ENCODE measurements at regions of chr7 and their contacts with region 1.

Region 1: DNA sequence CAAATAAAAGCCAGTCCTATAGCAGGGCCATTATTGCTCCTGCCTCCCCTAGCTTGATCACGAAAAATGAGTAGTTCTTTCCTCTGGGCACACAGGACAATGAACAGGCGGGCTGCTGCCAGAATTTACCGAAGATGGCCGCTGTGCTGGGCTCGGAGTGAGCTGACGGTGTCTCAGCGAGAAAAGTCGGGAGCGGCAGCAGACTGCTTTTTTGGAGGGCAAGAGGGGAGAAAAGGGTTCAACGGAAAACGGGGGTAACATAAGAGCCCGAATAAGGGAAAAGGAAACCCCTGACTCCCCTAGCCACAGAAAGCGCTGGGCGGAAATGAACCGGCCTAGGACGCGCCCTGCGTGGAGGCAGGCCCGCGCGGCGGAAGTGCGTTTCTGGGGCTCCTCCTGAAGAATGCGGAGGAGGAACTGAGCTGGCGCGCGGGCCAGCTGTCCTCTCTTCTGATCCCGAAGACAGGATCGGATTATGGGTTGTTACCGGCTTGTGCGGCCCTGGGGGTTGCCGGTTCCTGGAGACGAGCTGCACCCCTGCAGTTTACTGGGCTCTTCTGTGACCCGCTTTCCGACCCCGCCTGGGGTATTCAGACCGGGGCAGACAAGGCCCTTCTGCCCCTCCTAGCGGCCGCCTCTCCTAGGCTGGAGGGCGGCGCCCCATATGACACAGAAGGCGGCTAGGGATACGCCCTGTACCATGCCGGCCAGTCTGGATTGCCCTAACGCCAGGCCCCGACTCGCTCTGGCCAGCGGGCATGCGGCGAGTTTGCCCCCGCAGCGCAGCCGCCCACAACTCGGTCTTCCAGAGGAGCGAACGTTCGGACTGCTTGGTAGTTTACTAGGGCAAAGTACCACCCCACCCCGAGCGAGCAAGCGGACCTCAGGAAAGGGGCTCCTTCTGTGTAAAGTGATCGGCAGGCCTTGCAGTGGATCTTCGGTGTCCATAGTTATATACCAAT is 30.1 kb upstream of the KMT2E start:
- DNase-seq: peak; percentile 64 to 89 (median 80)
- ATAC-seq: peak; percentile 88 to 91 (median 90)
- H3K4me3 ChIP-seq: peak overlapping the region; percentile 92 to 93
- H3K4me3 Mint-ChIP-seq: peak overlapping the region; percentile 98 to 100 (median 100)
- H3K27ac ChIP-seq: peak overlapping the region; percentile 99
- H3K27ac Mint-ChIP-seq: peak overlapping the region; percentile 100
- H3K4me1 ChIP-seq: peaks cover 24 to 30% of the 10 kb centered on the region in 2 experiments
- H3K4me1 Mint-ChIP-seq: peaks cover 52 to 74% (median 69%) of the 10 kb centered on the region in 3 donors
- H3K27me3 ChIP-seq: no peaks in the 10 kb centered on the region
- H3K27me3 Mint-ChIP-seq: no peaks in the 10 kb centered on the region

Region 2: DNA sequence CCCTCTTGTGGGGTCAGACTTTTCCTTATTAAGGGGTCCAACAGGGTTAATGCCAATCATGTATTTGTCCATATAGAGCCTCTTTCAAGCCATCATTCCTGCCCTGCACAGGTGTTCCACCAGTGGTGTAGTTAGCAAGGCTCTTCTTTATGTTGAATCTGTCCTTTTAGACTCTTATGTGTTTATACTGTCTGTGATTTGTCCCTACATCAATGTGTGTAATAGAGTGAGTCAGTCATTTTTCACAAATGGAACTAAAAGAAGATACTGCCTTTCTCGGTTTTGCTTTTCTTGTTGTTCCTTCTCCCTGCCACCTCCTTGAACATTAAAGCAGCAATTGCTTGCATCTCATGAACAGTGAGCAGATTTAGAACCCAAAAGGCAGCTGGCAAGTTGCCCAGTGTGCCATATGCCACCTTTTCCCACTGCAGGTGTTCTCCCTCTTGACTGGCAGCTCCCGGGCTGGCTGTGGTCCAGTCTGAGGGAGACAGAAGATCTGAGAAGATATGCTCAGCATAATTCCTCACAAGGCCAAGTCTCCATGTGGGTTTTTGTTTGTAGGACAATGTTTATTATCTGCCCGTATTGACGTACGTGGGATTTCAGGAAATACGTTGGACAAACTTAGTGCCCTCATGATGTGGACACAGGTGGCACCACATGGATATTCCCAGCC is 501.4 kb before region 1 on chr7:
- CTCF ChIA-PET with region 1: no interaction called
- POLR2A ChIA-PET with region 1: no interaction called
- DNase-seq: no peak
- ATAC-seq: no peak
- H3K4me3 ChIP-seq: no peak overlapping the region
- H3K4me3 Mint-ChIP-seq: no peak overlapping the region
- H3K27ac ChIP-seq: no peak overlapping the region
- H3K27ac Mint-ChIP-seq: no peak overlapping the region
- H3K4me1 ChIP-seq: no peaks in the 10 kb centered on the region
- H3K4me1 Mint-ChIP-seq: no peaks in the 10 kb centered on the region
- H3K27me3 ChIP-seq: peaks cover 0 to 2% of the 10 kb centered on the region in 2 experiments
- H3K27me3 Mint-ChIP-seq: peaks cover 0 to 15% of the 10 kb centered on the region in 2 donors

Region 3: GRCh38 chr7:104791080-104791479 is 192.8 kb before region 1 on chr7:
- CTCF ChIA-PET with region 1: no interaction called
- POLR2A ChIA-PET with region 1: no interaction called
- DNase-seq: no peak
- ATAC-seq: no peak
- H3K4me3 ChIP-seq: no peak overlapping the region
- H3K4me3 Mint-ChIP-seq: no peak overlapping the region
- H3K27ac ChIP-seq: no peak overlapping the region
- H3K27ac Mint-ChIP-seq: no peak overlapping the region
- H3K4me1 ChIP-seq: no peaks in the 10 kb centered on the region
- H3K4me1 Mint-ChIP-seq: no peaks in the 10 kb centered on the region
- H3K27me3 ChIP-seq: no peaks in the 10 kb centered on the region
- H3K27me3 Mint-ChIP-seq: peaks cover 10 to 37% of the 10 kb centered on the region in 2 donors

Region 4: DNA sequence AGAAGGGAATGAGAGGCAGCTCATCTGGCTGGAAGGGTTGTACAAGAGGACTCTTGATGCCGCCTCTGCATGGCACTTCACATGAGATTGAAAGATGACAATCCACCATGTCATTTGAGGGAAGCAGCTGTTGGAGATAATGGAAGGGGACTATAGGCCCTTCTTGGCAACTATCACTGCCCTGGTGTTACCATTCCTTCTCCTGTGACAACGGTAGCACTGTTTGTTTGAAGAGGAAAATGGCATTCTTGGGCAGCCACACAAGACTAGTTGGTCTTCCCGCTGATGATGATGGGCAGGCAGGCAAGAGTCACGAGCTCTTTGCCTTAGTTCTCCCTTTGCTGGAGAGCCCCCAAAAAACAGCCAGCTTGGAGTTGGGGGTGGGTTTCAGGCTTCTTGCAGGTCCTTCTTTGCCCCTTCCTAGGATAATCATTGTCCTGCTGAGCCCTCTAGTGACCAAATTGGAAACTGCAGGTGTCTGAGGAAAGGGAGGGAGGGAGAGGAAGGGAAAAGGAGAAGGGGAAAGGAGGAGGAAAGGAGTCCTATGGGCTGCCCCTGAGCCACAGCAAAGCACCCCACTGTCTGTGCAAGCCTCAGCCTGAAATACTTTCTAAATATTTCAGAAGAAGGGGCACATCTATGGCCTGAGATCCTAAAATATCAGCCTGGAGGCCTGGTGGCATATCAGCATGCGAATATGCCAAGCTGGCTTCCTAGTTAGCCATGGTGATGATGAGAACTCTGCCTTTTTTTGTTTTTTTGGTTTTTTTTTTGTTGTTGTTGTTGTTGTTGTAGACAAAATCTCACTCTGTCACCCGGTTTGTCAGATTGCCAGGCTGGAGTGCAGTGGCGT is 135.5 kb before region 1 on chr7:
- CTCF ChIA-PET with region 1: no interaction called
- POLR2A ChIA-PET with region 1: no interaction called
- DNase-seq: peak in 26 of 35 experiments; percentile 7 to 68 (median 28)
- ATAC-seq: peak; percentile 32 to 56 (median 52)
- H3K4me3 ChIP-seq: no peak overlapping the region
- H3K4me3 Mint-ChIP-seq: no peak overlapping the region
- H3K27ac ChIP-seq: no peak overlapping the region
- H3K27ac Mint-ChIP-seq: no peak overlapping the region
- H3K4me1 ChIP-seq: no peaks in the 10 kb centered on the region
- H3K4me1 Mint-ChIP-seq: no peaks in the 10 kb centered on the region
- H3K27me3 ChIP-seq: peaks cover 0 to 23% of the 10 kb centered on the region in 2 experiments
- H3K27me3 Mint-ChIP-seq: peaks cover 12 to 20% of the 10 kb centered on the region in 2 donors

Region 5: DNA sequence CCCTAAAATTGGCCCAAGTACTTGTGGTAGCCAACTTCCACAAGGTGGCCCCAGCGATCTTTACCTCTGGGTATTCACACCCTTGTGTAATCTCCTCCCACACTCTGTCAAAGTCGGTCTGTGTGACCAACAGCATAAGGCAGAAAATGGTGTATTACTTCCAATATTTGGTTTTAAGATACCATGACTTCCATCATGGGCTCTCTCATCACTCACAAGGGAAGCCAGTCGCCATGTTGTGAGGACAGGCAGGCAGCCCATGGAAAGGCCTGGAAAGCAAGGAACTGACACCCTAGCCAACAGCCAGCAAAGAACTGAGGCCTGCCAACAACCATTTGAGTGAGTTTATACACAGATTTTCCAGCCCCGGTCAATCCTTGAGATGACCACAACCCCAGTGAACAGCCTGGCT is 60.8 kb before region 1 on chr7:
- CTCF ChIA-PET with region 1: interaction called, 10 to 16 read pairs
- POLR2A ChIA-PET with region 1: interaction called in 1 of 2 experiments, 4 read pairs
- DNase-seq: peak; percentile 24 to 86 (median 62)
- ATAC-seq: peak; percentile 87 to 96 (median 90)
- H3K4me3 ChIP-seq: no peak overlapping the region
- H3K4me3 Mint-ChIP-seq: no peak overlapping the region
- H3K27ac ChIP-seq: no peak overlapping the region
- H3K27ac Mint-ChIP-seq: peak overlapping the region; percentile 24 to 61
- H3K4me1 ChIP-seq: peaks cover 0 to 4% of the 10 kb centered on the region in 2 experiments
- H3K4me1 Mint-ChIP-seq: peaks cover 4 to 6% (median 4%) of the 10 kb centered on the region in 3 donors
- H3K27me3 ChIP-seq: no peaks in the 10 kb centered on the region
- H3K27me3 Mint-ChIP-seq: peaks cover 0 to 3% of the 10 kb centered on the region in 2 donors

Region 6: GRCh38 chr7:105003275-105003674 is 19.4 kb after region 1 on chr7:
- CTCF ChIA-PET with region 1: interaction called, 11 to 16 read pairs
- POLR2A ChIA-PET with region 1: interaction called, 11 to 266 read pairs
- DNase-seq: peak in 2 of 35 experiments; percentile 40 to 54
- ATAC-seq: peak; percentile 54 to 83 (median 74)
- H3K4me3 ChIP-seq: no peak overlapping the region
- H3K4me3 Mint-ChIP-seq: peak overlapping the region; percentile 62 to 69 (median 68)
- H3K27ac ChIP-seq: peak overlapping the region; percentile 13
- H3K27ac Mint-ChIP-seq: peak overlapping the region; percentile 81 to 83
- H3K4me1 ChIP-seq: peaks cover 55 to 59% of the 10 kb centered on the region in 2 experiments
- H3K4me1 Mint-ChIP-seq: peaks cover 90 to 94% (median 93%) of the 10 kb centered on the region in 3 donors
- H3K27me3 ChIP-seq: no peaks in the 10 kb centered on the region
- H3K27me3 Mint-ChIP-seq: no peaks in the 10 kb centered on the region

Region 7: GRCh38 chr7:105024743-105025142 is 40.9 kb after region 1 on chr7:
- CTCF ChIA-PET with region 1: interaction called, 8 to 196 read pairs
- POLR2A ChIA-PET with region 1: interaction called in 1 of 2 experiments, 5 read pairs
- DNase-seq: no peak
- ATAC-seq: no peak
- H3K4me3 ChIP-seq: no peak overlapping the region
- H3K4me3 Mint-ChIP-seq: peak overlapping the region; percentile 21 to 38 (median 28)
- H3K27ac ChIP-seq: no peak overlapping the region
- H3K27ac Mint-ChIP-seq: no peak overlapping the region
- H3K4me1 ChIP-seq: peaks cover 34 to 41% of the 10 kb centered on the region in 2 experiments
- H3K4me1 Mint-ChIP-seq: peaks cover 85 to 92% (median 92%) of the 10 kb centered on the region in 3 donors
- H3K27me3 ChIP-seq: no peaks in the 10 kb centered on the region
- H3K27me3 Mint-ChIP-seq: no peaks in the 10 kb centered on the region

Region 8: GRCh38 chr7:105046414-105046813 is 62.6 kb after region 1 on chr7:
- CTCF ChIA-PET with region 1: interaction called, 18 to 81 read pairs
- POLR2A ChIA-PET with region 1: interaction called, 5 read pairs
- DNase-seq: no peak
- ATAC-seq: no peak
- H3K4me3 ChIP-seq: no peak overlapping the region
- H3K4me3 Mint-ChIP-seq: no peak overlapping the region
- H3K27ac ChIP-seq: no peak overlapping the region
- H3K27ac Mint-ChIP-seq: peak overlapping the region; percentile 0 to 42
- H3K4me1 ChIP-seq: peaks cover 7 to 18% of the 10 kb centered on the region in 2 experiments
- H3K4me1 Mint-ChIP-seq: peaks cover 55 to 68% (median 59%) of the 10 kb centered on the region in 3 donors
- H3K27me3 ChIP-seq: no peaks in the 10 kb centered on the region
- H3K27me3 Mint-ChIP-seq: no peaks in the 10 kb centered on the region

Region 9: DNA sequence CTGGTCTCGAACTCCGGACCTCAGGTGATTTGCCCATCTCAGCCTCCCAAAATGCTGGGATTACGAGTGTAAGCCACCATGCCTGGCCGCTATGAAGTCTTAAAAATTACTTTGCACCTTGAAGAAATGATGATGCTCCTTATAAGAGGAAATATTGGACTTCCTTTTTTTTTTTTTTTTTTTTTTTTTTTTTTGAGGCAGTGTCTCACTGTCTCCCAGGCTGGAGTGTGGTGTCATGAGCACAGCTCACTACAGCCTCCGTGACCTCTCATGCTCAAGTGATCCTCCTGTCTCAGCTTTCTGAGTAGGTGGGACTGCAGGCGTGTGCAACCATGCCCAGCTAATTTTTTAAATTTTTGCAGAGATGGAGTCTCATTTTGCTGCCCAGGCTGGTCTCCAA is 95.5 kb after region 1 on chr7:
- CTCF ChIA-PET with region 1: interaction called, 6 to 10 read pairs
- POLR2A ChIA-PET with region 1: no interaction called
- DNase-seq: no peak
- ATAC-seq: no peak
- H3K4me3 ChIP-seq: no peak overlapping the region
- H3K4me3 Mint-ChIP-seq: no peak overlapping the region
- H3K27ac ChIP-seq: no peak overlapping the region
- H3K27ac Mint-ChIP-seq: no peak overlapping the region
- H3K4me1 ChIP-seq: no peaks in the 10 kb centered on the region
- H3K4me1 Mint-ChIP-seq: peaks cover 12 to 16% (median 15%) of the 10 kb centered on the region in 3 donors
- H3K27me3 ChIP-seq: no peaks in the 10 kb centered on the region
- H3K27me3 Mint-ChIP-seq: no peaks in the 10 kb centered on the region

Region 10: DNA sequence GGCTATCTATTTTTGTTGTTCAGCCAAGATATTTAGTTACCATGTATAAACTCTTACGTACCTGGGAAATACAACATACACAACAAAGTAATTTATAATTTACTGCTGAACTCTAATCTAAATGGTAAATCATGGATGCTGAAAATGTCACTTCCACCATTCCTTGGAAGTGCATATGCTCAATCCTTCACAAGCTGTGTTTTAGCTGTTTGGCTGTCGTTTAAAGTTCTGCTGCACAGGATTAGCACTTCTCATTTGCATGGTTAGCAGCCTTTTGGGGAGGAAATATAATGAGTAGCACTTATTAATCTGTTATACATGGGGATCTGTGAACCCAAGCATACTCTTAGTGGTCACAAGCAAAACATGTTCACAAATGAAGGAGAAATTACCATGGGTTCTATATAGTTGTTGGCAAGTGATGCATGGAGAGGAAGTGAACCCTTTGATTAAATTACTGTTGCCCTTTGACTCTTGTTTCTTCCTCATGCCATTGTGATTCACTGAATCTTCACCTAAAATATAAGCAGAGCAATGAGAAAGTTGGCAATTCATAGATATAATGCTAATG is 1899.7 kb after region 1 on chr7:
- CTCF ChIA-PET with region 1: no interaction called
- POLR2A ChIA-PET with region 1: no interaction called
- DNase-seq: no peak
- ATAC-seq: no peak
- H3K4me3 ChIP-seq: no peak overlapping the region
- H3K4me3 Mint-ChIP-seq: no peak overlapping the region
- H3K27ac ChIP-seq: no peak overlapping the region
- H3K27ac Mint-ChIP-seq: no peak overlapping the region
- H3K4me1 ChIP-seq: peaks cover 0 to 2% of the 10 kb centered on the region in 2 experiments
- H3K4me1 Mint-ChIP-seq: peaks cover 18 to 34% (median 29%) of the 10 kb centered on the region in 3 donors
- H3K27me3 ChIP-seq: no peaks in the 10 kb centered on the region
- H3K27me3 Mint-ChIP-seq: no peaks in the 10 kb centered on the region